Endothelial cell of umbilical vein (primary cell): ENCODE measurements at regions of chr5 and their contacts with region 1.

Region 1: GRCh38 chr5:91383027-91383955 is at the start of gene ARRDC3:
- DNase-seq: peak; percentile 98
- H3K4me3 ChIP-seq: peak within 1 kb of the TSS; percentile 89 to 99 (median 90)
- H3K27ac ChIP-seq: peak within 1 kb of the TSS; percentile 96
- H3K4me1 ChIP-seq: peaks cover 17% of the 10 kb centered on the region
- H3K27me3 ChIP-seq: no peaks in the 10 kb centered on the region
- CTCF ChIP-seq: no peak
- POLR2A ChIP-seq: peak; percentile 99
- total RNA-seq, gene ARRDC3: 35.3 and 43.1 TPM in 2 replicates

Region 2: GRCh38 chr5:90109290-90109689 is 1274.0 kb before region 1 on chr5:
- CTCF ChIA-PET with region 1: no interaction called
- POLR2A ChIA-PET with region 1: no interaction called
- dilution Hi-C with region 1: no loop called
- intact Hi-C with region 1: no loop called
- DNase-seq: no peak
- H3K4me3 ChIP-seq: no peak overlapping the region
- H3K27ac ChIP-seq: no peak overlapping the region
- H3K4me1 ChIP-seq: peaks cover 4% of the 10 kb centered on the region
- H3K27me3 ChIP-seq: no peaks in the 10 kb centered on the region
- CTCF ChIP-seq: no peak
- POLR2A ChIP-seq: no peak

Region 3: DNA sequence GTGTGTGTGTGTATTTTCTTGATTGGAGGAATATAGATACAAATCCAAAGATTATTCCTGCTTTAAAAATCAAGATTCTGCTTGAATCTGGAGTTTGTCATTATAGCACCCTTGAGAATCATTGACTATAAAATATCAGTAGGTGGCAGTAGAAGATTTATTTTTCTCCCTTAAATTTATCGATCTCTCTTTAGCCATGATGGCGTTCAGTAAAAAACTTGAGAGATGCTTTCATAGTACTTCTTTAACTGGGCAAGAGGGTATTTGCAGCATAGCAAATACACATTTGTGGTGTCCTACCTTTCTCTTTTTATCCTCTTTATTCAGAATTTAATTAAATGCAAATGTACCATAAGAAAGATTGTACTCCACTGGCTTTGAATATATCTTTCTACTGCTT is 517.0 kb before region 1 on chr5:
- CTCF ChIA-PET with region 1: interaction called, 147 read pairs
- POLR2A ChIA-PET with region 1: no interaction called
- dilution Hi-C with region 1: no loop called
- intact Hi-C with region 1: loop called (anchors 1 kb)
- DNase-seq: peak; percentile 71
- H3K4me3 ChIP-seq: no peak overlapping the region
- H3K27ac ChIP-seq: no peak overlapping the region
- H3K4me1 ChIP-seq: no peaks in the 10 kb centered on the region
- H3K27me3 ChIP-seq: no peaks in the 10 kb centered on the region
- CTCF ChIP-seq: peak; percentile 4 to 5
- POLR2A ChIP-seq: no peak

Region 4: DNA sequence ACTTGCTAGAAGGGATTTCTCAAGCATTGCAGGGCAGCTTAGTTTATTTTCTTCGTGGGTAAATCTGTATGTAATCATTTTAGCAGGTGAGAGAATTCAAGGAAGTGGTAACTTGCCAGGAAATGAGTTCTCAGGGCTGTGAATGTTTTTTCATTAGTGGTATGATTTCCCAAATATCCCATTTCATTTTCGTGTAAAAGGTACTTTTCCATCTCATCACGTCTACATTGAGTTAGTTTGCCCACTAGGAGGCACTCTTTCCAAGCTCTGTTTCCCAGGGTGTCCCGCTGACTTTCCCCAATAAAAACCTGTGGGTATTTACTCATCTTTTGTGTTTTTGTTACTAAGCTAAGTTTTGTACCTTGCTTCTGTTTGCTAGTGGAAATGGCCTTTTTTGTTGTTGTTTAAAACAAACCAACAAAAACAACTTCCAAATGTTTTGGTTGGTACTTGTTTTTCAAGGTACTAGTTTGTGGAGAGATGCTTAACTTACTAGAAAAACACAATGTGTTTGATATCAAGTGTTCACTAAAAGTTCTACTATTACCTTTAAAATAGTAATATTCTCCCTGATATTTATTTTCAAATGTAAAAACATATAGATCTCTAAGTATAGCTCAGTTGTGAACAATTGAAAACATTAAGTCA is 451.1 kb before region 1 on chr5:
- CTCF ChIA-PET with region 1: interaction called, 158 read pairs
- POLR2A ChIA-PET with region 1: interaction called, 5 read pairs
- dilution Hi-C with region 1: loop called (anchors 25 kb)
- intact Hi-C with region 1: loop called (anchors 1 kb)
- DNase-seq: peak; percentile 93
- H3K4me3 ChIP-seq: no peak overlapping the region
- H3K27ac ChIP-seq: no peak overlapping the region
- H3K4me1 ChIP-seq: peaks cover 5% of the 10 kb centered on the region
- H3K27me3 ChIP-seq: no peaks in the 10 kb centered on the region
- CTCF ChIP-seq: peak; percentile 64 to 71
- POLR2A ChIP-seq: no peak

Region 5: DNA sequence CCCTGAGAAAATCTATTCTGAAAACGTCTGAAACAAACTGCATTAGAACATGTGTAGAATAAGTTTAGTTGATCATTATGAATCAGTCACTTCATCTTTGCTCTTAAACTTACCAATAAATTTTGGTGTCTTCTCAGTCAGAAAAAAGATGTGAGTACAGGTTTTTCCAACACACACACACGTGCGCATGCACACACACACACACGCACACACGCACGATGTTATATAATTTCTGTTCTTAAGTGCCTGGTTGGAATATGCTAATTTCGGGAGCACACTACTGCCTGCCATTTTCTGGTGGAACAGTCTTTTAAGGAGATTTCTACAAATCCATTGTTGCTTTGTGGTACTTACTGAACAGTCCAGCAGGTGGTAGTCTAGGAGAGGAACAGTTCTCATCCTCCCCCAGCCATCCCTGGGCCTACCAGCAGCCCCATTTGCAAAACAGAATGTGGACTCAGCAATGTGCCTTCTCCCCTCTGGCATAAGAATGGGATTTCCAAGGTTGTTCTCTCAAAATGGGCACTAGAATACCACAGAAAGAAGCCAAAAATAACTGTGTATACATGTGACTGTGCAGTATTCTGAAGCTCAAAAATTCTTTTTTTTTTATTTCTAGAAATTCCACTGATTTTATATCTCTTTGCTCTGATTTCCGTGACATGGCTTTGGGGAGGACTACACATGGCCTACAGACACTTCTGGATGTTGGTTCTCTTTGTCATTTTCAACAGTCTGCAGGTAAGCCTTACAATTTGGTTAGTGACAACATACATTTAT is 281.5 kb before region 1 on chr5:
- CTCF ChIA-PET with region 1: interaction called, 60 read pairs
- POLR2A ChIA-PET with region 1: interaction called, 3 read pairs
- dilution Hi-C with region 1: no loop called
- intact Hi-C with region 1: loop called (anchors 1 kb)
- DNase-seq: peak; percentile 85
- H3K4me3 ChIP-seq: no peak overlapping the region
- H3K27ac ChIP-seq: no peak overlapping the region
- H3K4me1 ChIP-seq: no peaks in the 10 kb centered on the region
- H3K27me3 ChIP-seq: no peaks in the 10 kb centered on the region
- CTCF ChIP-seq: peak; percentile 67 to 70
- POLR2A ChIP-seq: no peak

Region 6: GRCh38 chr5:91189480-91190300 is 193.6 kb before region 1 on chr5:
- CTCF ChIA-PET with region 1: interaction called, 18 read pairs
- POLR2A ChIA-PET with region 1: no interaction called
- dilution Hi-C with region 1: no loop called
- intact Hi-C with region 1: loop called (anchors 1 kb)
- DNase-seq: peak; percentile 87
- H3K4me3 ChIP-seq: no peak overlapping the region
- H3K27ac ChIP-seq: no peak overlapping the region
- H3K4me1 ChIP-seq: peaks cover 6% of the 10 kb centered on the region
- H3K27me3 ChIP-seq: no peaks in the 10 kb centered on the region
- CTCF ChIP-seq: no peak
- POLR2A ChIP-seq: no peak

Region 7: DNA sequence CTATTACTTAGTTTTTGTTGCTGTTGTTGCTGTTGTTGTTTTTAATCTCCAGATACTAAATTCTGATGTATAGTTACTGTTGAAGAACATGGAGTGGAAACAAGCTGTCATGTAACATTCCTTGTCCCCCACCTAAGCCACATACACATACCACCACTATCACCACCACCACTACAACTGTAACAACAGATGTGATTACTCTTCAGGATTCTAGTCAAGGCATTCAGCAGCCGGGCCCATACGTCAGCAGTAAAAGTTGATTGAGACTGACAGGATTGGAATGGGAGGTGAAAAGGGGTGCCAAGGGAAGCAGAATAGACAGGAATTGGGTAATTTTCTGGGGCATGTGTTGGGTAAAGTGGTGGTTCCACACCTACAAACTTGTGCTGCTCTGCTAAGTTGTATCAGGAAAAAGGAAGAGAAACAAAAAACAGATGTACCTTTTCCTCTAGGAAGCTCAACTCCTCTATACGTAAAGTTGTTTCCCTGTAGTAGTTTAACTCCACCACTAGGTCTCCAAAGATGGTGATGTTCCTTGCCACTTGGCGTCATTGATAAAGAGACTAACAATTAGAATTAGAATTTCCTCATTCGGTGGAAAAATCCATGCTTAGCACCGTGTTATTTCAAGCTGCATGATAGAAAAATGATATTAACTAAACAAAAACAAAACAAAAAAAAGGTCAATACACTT is 138.8 kb before region 1 on chr5:
- CTCF ChIA-PET with region 1: interaction called, 10 read pairs
- POLR2A ChIA-PET with region 1: no interaction called
- dilution Hi-C with region 1: no loop called
- intact Hi-C with region 1: no loop called
- DNase-seq: no peak
- H3K4me3 ChIP-seq: no peak overlapping the region
- H3K27ac ChIP-seq: no peak overlapping the region
- H3K4me1 ChIP-seq: no peaks in the 10 kb centered on the region
- H3K27me3 ChIP-seq: no peaks in the 10 kb centered on the region
- CTCF ChIP-seq: no peak
- POLR2A ChIP-seq: no peak

Region 8: GRCh38 chr5:91397791-91398190 is 14.5 kb after region 1 on chr5:
- CTCF ChIA-PET with region 1: interaction called, 10 read pairs
- POLR2A ChIA-PET with region 1: no interaction called
- dilution Hi-C with region 1: no loop called
- intact Hi-C with region 1: no loop called
- DNase-seq: no peak
- H3K4me3 ChIP-seq: no peak overlapping the region
- H3K27ac ChIP-seq: no peak overlapping the region
- H3K4me1 ChIP-seq: no peaks in the 10 kb centered on the region
- H3K27me3 ChIP-seq: no peaks in the 10 kb centered on the region
- CTCF ChIP-seq: no peak
- POLR2A ChIP-seq: no peak